ENCODE measurements at regions of chr10 and their contacts with region 1.

Region 1: GRCh38 chr10:63521416-63522276 is 445 bp downstream of the REEP3 start:
- DNase-seq: peak; percentile 75
- ATAC-seq: peak; percentile 87
- H3K4me3 ChIP-seq: peak overlapping the region; percentile 79
- H3K27ac ChIP-seq: peak overlapping the region; percentile 95
- H3K4me1 ChIP-seq: peaks cover 6% of the 10 kb centered on the region
- H3K27me3 ChIP-seq: no peaks in the 10 kb centered on the region
- CTCF ChIP-seq: no peak
- POLR2A ChIP-seq: peak; percentile 29; the same call in 1 of the 2 replicates
- RAD21 ChIP-seq: no peak

Region 2: DNA sequence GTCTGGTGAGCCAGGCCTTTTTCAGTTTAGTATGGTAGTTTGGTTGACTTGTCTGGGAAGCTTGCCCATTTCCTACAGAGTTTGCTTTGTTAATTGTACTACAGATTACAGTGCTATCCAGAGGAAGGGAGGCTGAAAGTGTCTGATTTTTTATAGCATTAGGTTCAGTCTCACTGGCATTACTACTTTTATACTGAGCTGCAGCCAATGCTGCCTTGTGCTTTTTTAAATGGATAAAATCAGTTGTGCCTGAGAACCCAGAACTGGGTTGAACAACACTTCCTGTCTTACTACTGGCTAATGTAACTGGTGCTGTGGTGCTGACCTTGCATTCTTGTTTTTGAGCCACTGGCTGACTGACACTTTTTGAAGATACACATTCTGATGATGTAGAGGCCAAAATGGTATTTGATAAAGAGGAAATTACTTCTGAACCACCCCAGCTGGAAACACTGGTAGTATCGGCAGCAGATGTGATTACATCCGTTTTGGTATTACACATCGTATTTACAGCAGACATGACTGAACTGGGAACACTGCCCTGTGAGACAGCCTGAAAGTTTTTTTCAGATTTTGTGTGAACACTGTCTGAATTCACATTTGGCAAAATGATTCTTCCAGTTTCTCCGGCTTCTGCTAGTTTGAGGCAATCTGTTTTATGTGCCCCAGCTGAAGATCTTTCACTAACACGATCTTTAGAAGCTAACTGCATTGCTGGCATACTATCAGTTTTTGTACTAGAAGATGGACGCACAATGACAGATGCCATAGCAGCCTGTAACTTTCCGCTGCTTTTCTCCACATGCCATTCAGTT is 314.4 kb before region 1 on chr10:
- CTCF ChIA-PET with region 1: no interaction called
- POLR2A ChIA-PET with region 1: no interaction called
- dilution Hi-C with region 1: no loop called
- in situ Hi-C with region 1: no loop called
- intact Hi-C with region 1: loop called (anchors 5 kb)
- DNase-seq: peak; percentile 94
- ATAC-seq: peak; percentile 76
- H3K4me3 ChIP-seq: no peak overlapping the region; the same call in 1 of the 2 replicates
- H3K27ac ChIP-seq: peak overlapping the region; percentile 46; the same call in 1 of the 2 replicates
- H3K4me1 ChIP-seq: peaks cover 16% of the 10 kb centered on the region
- H3K27me3 ChIP-seq: no peaks in the 10 kb centered on the region
- CTCF ChIP-seq: no peak
- POLR2A ChIP-seq: no peak
- RAD21 ChIP-seq: no peak

Region 3: DNA sequence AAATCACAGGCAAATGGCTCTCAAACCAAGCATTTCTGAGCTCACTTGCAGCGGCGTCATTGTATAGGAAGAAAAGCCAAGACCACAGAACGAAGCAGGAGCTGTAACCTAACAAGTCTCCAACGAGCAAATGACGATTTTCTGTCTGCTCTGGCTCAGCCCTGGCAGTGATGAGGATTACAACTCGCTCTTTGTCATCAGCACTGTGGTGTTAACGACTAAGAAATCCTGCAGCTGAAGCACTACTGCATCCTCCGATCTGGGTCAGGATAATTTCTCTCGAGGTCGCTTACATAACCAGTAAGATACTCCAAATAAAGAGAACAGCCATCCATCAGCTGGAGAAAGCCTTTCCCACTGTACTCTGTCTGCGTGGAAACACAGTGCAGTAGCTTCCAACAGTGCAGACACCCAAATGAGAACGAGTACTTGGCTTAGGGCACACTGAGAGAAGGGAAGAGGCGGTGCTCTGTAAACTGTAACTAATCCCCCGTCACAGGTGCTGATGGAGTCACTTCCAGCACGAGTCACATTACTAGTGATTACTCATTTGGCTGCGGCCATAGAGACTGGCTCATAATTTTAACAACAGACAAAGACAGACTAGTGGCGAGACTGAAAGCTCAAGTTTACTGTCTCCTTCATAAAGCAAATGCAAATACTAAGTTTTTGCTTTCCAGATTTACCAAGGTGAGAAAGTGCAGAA is 252.7 kb before region 1 on chr10:
- CTCF ChIA-PET with region 1: no interaction called
- POLR2A ChIA-PET with region 1: no interaction called
- dilution Hi-C with region 1: no loop called
- in situ Hi-C with region 1: no loop called
- intact Hi-C with region 1: loop called (anchors 5 kb)
- DNase-seq: peak; percentile 97
- ATAC-seq: peak; percentile 80
- H3K4me3 ChIP-seq: peak overlapping the region; percentile 55
- H3K27ac ChIP-seq: peak overlapping the region; percentile 87
- H3K4me1 ChIP-seq: peaks cover 4% of the 10 kb centered on the region
- H3K27me3 ChIP-seq: no peaks in the 10 kb centered on the region
- CTCF ChIP-seq: peak; percentile 17; the same call in 1 of the 2 replicates
- POLR2A ChIP-seq: peak; percentile 98
- RAD21 ChIP-seq: peak; percentile 8; the same call in 1 of the 2 replicates

Region 4: GRCh38 chr10:63614371-63614891 is 92.8 kb after region 1 on chr10:
- CTCF ChIA-PET with region 1: no interaction called
- POLR2A ChIA-PET with region 1: interaction called, 4 read pairs
- dilution Hi-C with region 1: no loop called
- in situ Hi-C with region 1: no loop called
- intact Hi-C with region 1: loop called (anchors 5 kb)
- DNase-seq: peak; percentile 63
- ATAC-seq: peak; percentile 78
- H3K4me3 ChIP-seq: no peak overlapping the region
- H3K27ac ChIP-seq: peak overlapping the region; percentile 61; the same call in 1 of the 2 replicates
- H3K4me1 ChIP-seq: peaks cover 5% of the 10 kb centered on the region; the same call in 1 of the 2 replicates
- H3K27me3 ChIP-seq: no peaks in the 10 kb centered on the region
- CTCF ChIP-seq: no peak
- POLR2A ChIP-seq: no peak
- RAD21 ChIP-seq: no peak

Region 5: GRCh38 chr10:63711867-63712716 is 190.4 kb after region 1 on chr10:
- CTCF ChIA-PET with region 1: no interaction called
- POLR2A ChIA-PET with region 1: no interaction called
- dilution Hi-C with region 1: no loop called
- in situ Hi-C with region 1: no loop called
- intact Hi-C with region 1: loop called (anchors 2 kb)
- DNase-seq: peak; percentile 97
- ATAC-seq: peak; percentile 79
- H3K4me3 ChIP-seq: no peak overlapping the region
- H3K27ac ChIP-seq: no peak overlapping the region
- H3K4me1 ChIP-seq: peaks cover 17% of the 10 kb centered on the region
- H3K27me3 ChIP-seq: no peaks in the 10 kb centered on the region
- CTCF ChIP-seq: no peak
- POLR2A ChIP-seq: no peak
- RAD21 ChIP-seq: no peak

Measured in IMR-90 (cell line).